ENCODE measurements at regions of chr10 and their contacts with region 1.

Region 1: DNA sequence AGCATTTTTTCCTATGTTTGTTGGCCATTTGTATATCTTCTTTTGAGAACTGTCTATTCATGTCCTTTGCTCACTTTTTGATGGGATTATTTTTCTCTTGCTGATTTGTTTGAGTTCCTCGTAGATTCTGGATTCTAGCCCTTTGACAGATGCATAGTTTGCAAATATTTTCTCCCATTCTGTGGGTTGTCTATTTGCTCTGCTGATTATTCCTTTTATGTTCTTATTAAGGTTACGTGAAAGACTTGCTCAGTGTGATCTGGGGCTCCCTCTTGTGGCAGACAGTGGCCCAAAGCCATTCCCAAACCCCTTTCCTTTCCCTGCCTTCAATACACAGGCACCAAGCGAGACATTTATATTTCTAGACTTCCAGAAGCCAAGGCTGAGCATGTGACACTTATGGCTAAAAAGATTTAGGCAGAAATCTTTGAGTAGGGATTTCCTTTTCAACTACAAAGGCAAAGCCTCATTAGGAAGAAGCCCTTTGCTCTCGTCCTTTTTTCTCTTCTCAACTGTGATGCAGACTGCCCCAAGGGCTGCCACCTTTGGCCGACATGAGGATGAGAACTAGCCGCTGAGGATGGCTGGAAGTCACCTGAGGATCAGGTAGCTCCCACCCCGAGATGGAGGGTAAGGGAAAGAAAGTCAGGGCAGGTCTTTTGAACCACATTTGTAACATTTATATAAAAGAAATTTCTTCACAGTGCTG is 23.6 kb downstream of the ST8SIA6 start:
- DNase-seq: peak; percentile 37
- CTCF ChIP-seq: peak; percentile 88

Region 2: GRCh38 chr10:16828114-16828568 is 602.7 kb before region 1 on chr10:
- in situ Hi-C with region 1: loop called (anchors 25 kb)
- DNase-seq: peak; percentile 26
- CTCF ChIP-seq: peak; percentile 53

Region 3: DNA sequence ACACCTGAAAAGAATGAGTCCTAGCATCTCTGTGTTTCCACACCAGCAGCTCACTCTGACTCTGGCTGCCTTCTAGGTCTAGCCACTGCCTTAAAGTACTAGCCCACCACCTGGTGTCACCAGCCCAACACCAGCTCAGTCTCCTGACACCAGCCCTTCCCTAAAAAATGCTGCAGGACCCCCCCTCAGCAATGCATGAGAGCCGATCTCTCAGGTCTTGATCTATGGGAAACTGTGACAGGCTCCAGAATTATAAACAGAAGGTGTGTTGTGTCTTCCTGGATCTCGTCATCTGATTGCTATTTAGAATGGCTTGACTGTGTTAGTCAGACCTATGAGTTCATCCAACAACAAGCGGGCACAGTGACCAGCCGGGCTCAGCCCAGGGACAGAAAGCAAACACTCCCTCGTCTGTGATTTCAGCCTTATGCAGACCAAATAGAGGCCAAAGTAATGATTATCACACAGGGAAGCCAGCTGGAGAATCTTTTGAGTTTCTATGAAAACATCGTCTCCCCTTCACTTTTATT is 367.8 kb before region 1 on chr10:
- in situ Hi-C with region 1: no loop called
- DNase-seq: no peak
- CTCF ChIP-seq: no peak

Region 4: DNA sequence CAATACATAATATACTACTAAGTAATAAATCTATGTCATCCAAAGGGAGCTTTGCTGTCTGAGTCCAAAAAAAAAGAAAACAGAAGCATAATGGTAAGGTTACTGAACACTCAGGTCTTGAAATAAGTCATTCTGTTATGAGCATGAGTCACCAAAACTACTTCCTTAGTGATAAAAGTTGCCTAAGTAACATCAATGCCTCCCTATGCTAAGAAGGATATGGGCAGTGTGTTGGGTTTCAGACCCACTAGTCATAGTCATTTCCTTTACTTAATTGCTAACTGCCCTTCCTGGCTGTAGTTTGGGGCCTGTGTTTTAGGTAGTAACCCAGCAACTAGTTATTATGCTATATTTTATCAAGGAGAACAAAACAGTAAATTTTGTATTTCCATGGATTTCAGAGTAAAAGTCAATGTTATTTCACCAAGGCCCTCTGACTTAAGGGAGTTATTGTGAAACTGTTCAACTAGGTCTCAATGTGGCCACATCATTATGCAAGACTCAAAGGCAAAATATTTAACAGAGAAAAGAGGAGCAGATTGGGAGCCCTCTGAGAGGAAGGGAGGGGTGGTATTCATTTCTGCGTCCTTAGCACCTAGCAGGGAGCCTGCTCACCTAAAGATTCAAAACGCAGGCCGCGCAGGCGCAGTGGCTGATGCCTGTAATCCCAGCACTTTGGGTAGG is 214.4 kb before region 1 on chr10:
- in situ Hi-C with region 1: no loop called
- DNase-seq: peak; percentile 72
- CTCF ChIP-seq: no peak

Region 5: DNA sequence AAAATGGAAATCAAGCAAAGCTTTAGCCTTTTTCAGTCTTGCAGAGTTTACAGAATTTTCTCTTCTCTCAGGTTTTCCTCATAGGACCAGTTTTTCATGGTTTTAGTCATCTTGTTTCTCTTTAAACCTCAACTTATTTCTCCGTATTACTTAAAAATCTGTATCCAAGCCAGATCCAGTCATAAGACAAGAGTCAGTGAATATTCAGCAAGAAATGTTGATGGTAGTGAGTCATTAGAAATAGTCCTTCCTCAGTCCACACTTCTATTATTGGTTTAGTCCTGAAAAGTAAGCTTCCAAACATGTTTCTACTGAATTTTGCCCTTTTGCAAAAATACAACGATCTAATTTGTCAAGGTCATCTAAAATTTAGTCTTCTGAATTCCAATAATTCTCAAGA is 95.7 kb before region 1 on chr10:
- in situ Hi-C with region 1: no loop called
- DNase-seq: no peak
- CTCF ChIP-seq: no peak

Measured in GM13977 (cell line).